CD8-positive, alpha-beta T cell (primary cell): ENCODE measurements at regions of chr10 and their contacts with region 1.

Region 1: GRCh38 chr10:98408799-98409198 is 6.2 kb downstream of the PYROXD2 start:
- DNase-seq: peak in 2 of 9 experiments; percentile 28 to 59
- ATAC-seq: peak; percentile 31
- H3K4me3 ChIP-seq: no peak overlapping the region
- H3K4me3 Mint-ChIP-seq: no peak overlapping the region
- H3K27ac ChIP-seq: no peak overlapping the region
- H3K27ac Mint-ChIP-seq: no peak overlapping the region
- H3K4me1 ChIP-seq: no peaks in the 10 kb centered on the region
- H3K4me1 Mint-ChIP-seq: peaks cover 15% of the 10 kb centered on the region
- H3K27me3 ChIP-seq: no peaks in the 10 kb centered on the region
- H3K27me3 Mint-ChIP-seq: no peaks in the 10 kb centered on the region
- CTCF ChIP-seq: no peak

Region 2: DNA sequence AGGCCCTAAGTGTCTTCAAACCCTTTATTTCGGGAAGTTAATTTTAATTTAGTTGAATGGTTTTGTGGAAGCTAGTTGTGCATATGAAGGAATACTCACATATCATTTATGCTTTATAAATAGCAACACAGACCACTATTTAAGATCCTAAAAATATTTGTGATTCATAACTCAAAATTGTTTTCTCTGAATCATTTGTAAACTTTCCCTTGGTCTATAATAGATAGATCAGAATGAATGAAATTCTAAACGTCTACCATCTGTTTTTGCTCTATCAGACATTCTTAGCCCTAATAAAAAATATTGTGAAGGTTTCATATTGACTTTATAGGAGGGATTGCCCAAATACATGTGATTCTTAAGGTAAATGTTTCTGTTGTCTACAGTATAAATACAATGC is 184.3 kb before region 1 on chr10:
- CTCF ChIA-PET with region 1: no interaction called
- POLR2A ChIA-PET with region 1: no interaction called
- intact Hi-C with region 1: no loop called
- DNase-seq: no peak
- ATAC-seq: no peak
- H3K4me3 ChIP-seq: no peak overlapping the region
- H3K4me3 Mint-ChIP-seq: no peak overlapping the region
- H3K27ac ChIP-seq: no peak overlapping the region
- H3K27ac Mint-ChIP-seq: no peak overlapping the region
- H3K4me1 ChIP-seq: no peaks in the 10 kb centered on the region
- H3K4me1 Mint-ChIP-seq: peaks cover 16% of the 10 kb centered on the region
- H3K27me3 ChIP-seq: no peaks in the 10 kb centered on the region
- H3K27me3 Mint-ChIP-seq: no peaks in the 10 kb centered on the region
- CTCF ChIP-seq: no peak

Region 3: GRCh38 chr10:98425511-98426352 is 16.9 kb after region 1 on chr10:
- CTCF ChIA-PET with region 1: interaction called, 10 read pairs
- POLR2A ChIA-PET with region 1: no interaction called
- intact Hi-C with region 1: no loop called
- DNase-seq: peak in 7 of 9 experiments; percentile 17 to 64 (median 42)
- ATAC-seq: peak; percentile 65
- H3K4me3 ChIP-seq: no peak overlapping the region
- H3K4me3 Mint-ChIP-seq: no peak overlapping the region
- H3K27ac ChIP-seq: no peak overlapping the region
- H3K27ac Mint-ChIP-seq: no peak overlapping the region
- H3K4me1 ChIP-seq: no peaks in the 10 kb centered on the region
- H3K4me1 Mint-ChIP-seq: no peaks in the 10 kb centered on the region
- H3K27me3 ChIP-seq: no peaks in the 10 kb centered on the region
- H3K27me3 Mint-ChIP-seq: no peaks in the 10 kb centered on the region
- CTCF ChIP-seq: peak; percentile 74